ENCODE measurements at regions of chr22 and their contacts with region 1.

Region 1: GRCh38 chr22:30005213-30005857 is 74.9 kb upstream of the HORMAD2 start:
- DNase-seq: peak; percentile 46
- H3K4me3 Mint-ChIP-seq: no peak overlapping the region
- H3K27ac Mint-ChIP-seq: no peak overlapping the region
- H3K4me1 Mint-ChIP-seq: peaks cover 13% of the 10 kb centered on the region
- H3K27me3 Mint-ChIP-seq: no peaks in the 10 kb centered on the region

Region 2: GRCh38 chr22:29625090-29625825 is 380.1 kb before region 1 on chr22:
- intact Hi-C with region 1: loop called (anchors 10 kb)
- DNase-seq: no peak
- H3K4me3 Mint-ChIP-seq: no peak overlapping the region
- H3K27ac Mint-ChIP-seq: peak overlapping the region; percentile 72
- H3K4me1 Mint-ChIP-seq: peaks cover 55% of the 10 kb centered on the region
- H3K27me3 Mint-ChIP-seq: no peaks in the 10 kb centered on the region

Region 3: GRCh38 chr22:29716814-29717545 is 288.4 kb before region 1 on chr22:
- intact Hi-C with region 1: loop called (anchors 10 kb)
- DNase-seq: peak; percentile 22
- H3K4me3 Mint-ChIP-seq: no peak overlapping the region
- H3K27ac Mint-ChIP-seq: no peak overlapping the region
- H3K4me1 Mint-ChIP-seq: peaks cover 2% of the 10 kb centered on the region
- H3K27me3 Mint-ChIP-seq: peaks cover 36% of the 10 kb centered on the region

Region 4: GRCh38 chr22:29820961-29821789 is 184.2 kb before region 1 on chr22:
- intact Hi-C with region 1: loop called (anchors 10 kb)
- DNase-seq: peak; percentile 23
- H3K4me3 Mint-ChIP-seq: no peak overlapping the region
- H3K27ac Mint-ChIP-seq: peak overlapping the region; percentile 87
- H3K4me1 Mint-ChIP-seq: peaks cover 16% of the 10 kb centered on the region
- H3K27me3 Mint-ChIP-seq: no peaks in the 10 kb centered on the region

Region 5: DNA sequence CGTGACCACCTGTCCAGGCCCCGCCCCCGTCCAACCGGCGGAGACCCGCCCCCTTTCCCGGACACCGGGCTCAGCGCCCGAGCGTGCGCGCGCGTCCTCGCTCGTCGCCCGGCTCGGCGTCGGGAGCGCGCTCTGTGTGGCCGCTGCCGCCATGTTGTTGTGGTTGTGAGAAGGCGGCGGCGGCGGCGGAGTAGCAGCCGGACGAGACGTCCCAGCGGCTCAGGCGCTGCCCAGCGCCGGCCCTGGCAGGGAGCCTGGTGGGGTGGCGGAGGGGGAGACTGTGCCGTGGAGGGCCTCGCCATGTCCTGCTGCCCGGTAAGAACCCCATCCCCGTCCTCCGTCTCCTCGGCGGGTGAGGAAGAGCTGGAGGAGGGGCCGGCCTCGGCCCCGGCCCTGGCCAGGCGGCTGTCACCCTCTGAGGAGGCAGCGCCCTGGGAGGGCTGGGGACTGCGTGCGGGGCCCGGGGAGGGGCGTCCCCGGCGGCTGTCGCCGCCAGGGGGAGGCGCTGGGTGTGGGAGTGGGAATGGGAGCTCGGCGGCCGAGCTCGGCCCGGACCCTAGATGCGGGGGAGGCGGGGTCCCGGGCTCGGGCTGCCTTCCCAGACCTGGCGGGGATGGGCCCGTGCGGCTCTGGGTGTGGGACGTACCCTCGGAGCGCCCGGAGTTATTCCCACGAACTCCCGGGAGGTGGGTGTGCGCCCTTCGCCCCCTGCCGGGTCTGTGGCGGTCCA is 122.1 kb before region 1 on chr22 and contains the start of gene MTMR3:
- intact Hi-C with region 1: loop called (anchors 10 kb)
- DNase-seq: peak; percentile 92
- H3K4me3 Mint-ChIP-seq: peak within 1 kb of the TSS; percentile 90
- H3K27ac Mint-ChIP-seq: peak within 1 kb of the TSS; percentile 81
- H3K4me1 Mint-ChIP-seq: peaks cover 10% of the 10 kb centered on the region
- H3K27me3 Mint-ChIP-seq: peaks cover 2% of the 10 kb centered on the region
- total RNA-seq, gene MTMR3: 22.1 and 24.7 TPM in 2 replicates

Region 6: GRCh38 chr22:29954203-29954855 is 51.0 kb before region 1 on chr22:
- intact Hi-C with region 1: no loop called
- DNase-seq: no peak
- H3K4me3 Mint-ChIP-seq: no peak overlapping the region
- H3K27ac Mint-ChIP-seq: no peak overlapping the region
- H3K4me1 Mint-ChIP-seq: peaks cover 8% of the 10 kb centered on the region
- H3K27me3 Mint-ChIP-seq: no peaks in the 10 kb centered on the region

Measured in activated T-helper 2 cell treated with anti-CD3 and anti-CD28 coated beads, Interferon-gamma antibody, Interleukin-2, Interleukin-4, amounts not matched to agents 10 μg/mL and 5 μg/mL and 100 μg/mL, durations not matched to agents 14 hours and 24 hours and 36 hours (primary cell).